Activated CD8-positive, alpha-beta T cell treated with anti-CD3 and anti-CD28 coated beads for 36 hours (primary cell): ENCODE measurements at regions of chr12 and their contacts with region 1.

Region 1: GRCh38 chr12:50111693-50112455 is at the start of gene COX14:
- DNase-seq: peak; percentile 100
- ATAC-seq: peak; percentile 88
- H3K4me3 Mint-ChIP-seq: peak within 1 kb of the TSS; percentile 95
- H3K27ac Mint-ChIP-seq: peak within 1 kb of the TSS; percentile 94
- H3K4me1 Mint-ChIP-seq: peaks cover 34% of the 10 kb centered on the region
- H3K27me3 Mint-ChIP-seq: no peaks in the 10 kb centered on the region
- CTCF ChIP-seq: peak; percentile 84
- total RNA-seq, gene COX14: 43.1 to 51.0 TPM

Region 2: DNA sequence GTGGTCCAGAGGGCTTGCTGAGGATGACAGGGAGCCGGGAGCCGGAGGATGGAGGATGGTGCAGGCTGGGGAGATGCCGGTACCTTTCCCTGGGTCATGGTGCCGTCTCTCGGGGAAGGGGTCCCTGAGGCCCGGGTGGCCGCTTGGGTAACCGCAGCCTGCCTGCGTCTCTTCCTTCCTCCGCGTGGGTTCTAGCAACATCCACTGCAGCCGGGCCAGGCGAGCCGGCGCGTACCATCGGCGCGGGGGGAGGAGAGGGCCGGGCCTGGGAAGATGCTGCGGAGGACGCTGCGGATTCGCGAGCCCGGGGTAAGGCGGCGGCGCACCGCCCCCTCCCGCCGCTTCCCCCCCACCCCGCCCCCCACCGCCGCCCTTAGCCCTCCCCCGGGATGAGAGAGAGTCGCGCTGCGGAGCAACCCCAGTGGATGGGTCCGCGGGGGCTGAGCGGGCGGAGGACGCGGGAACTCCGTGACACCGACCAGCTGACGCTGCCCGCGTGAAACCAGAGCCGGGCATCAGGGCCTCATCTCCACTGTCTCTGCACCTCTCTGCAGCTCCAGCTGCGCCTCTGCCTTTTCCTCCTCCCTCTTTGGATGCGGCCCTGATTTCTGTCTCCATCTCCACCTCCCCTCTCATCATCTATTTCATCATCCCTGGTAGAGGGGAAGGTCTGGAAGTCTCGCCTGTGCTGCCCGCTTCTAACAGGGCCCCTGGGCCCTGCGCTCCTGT is 208.0 kb before region 1 on chr12 and contains the start of gene FAIM2:
- CTCF ChIA-PET with region 1: no interaction called
- POLR2A ChIA-PET with region 1: no interaction called
- intact Hi-C with region 1: no loop called
- DNase-seq: peak; percentile 62
- ATAC-seq: peak; percentile 78
- H3K4me3 Mint-ChIP-seq: peak within 1 kb of the TSS; percentile 65
- H3K27ac Mint-ChIP-seq: peak within 1 kb of the TSS; percentile 34
- H3K4me1 Mint-ChIP-seq: peaks cover 10% of the 10 kb centered on the region
- H3K27me3 Mint-ChIP-seq: peaks cover 9% of the 10 kb centered on the region
- CTCF ChIP-seq: no peak
- total RNA-seq, gene FAIM2: 0.22 to 0.56 TPM

Region 3: DNA sequence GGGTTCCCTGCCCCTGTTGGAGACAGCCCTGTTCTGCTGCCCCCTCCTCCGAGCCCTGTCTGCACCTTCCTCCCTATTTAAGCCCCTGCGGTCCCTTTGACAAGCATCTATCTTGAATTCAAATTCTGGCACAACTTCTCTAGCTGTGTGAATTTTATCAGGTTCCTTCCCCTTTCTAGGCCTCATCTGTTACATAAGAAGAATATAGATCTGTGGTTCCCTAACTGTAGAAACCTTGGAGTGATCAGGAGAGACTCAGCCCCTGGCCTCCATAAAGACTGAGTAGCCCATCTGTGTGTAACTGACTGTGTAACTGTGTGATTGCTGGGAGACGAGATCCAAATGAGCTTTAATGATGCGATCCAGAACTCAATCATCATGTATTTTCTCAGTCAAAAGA is 73.5 kb before region 1 on chr12:
- CTCF ChIA-PET with region 1: interaction called, 21 read pairs
- POLR2A ChIA-PET with region 1: no interaction called
- intact Hi-C with region 1: no loop called
- DNase-seq: no peak
- ATAC-seq: no peak
- H3K4me3 Mint-ChIP-seq: no peak overlapping the region
- H3K27ac Mint-ChIP-seq: no peak overlapping the region
- H3K4me1 Mint-ChIP-seq: peaks cover 12% of the 10 kb centered on the region
- H3K27me3 Mint-ChIP-seq: peaks cover 9% of the 10 kb centered on the region
- CTCF ChIP-seq: no peak

Region 4: DNA sequence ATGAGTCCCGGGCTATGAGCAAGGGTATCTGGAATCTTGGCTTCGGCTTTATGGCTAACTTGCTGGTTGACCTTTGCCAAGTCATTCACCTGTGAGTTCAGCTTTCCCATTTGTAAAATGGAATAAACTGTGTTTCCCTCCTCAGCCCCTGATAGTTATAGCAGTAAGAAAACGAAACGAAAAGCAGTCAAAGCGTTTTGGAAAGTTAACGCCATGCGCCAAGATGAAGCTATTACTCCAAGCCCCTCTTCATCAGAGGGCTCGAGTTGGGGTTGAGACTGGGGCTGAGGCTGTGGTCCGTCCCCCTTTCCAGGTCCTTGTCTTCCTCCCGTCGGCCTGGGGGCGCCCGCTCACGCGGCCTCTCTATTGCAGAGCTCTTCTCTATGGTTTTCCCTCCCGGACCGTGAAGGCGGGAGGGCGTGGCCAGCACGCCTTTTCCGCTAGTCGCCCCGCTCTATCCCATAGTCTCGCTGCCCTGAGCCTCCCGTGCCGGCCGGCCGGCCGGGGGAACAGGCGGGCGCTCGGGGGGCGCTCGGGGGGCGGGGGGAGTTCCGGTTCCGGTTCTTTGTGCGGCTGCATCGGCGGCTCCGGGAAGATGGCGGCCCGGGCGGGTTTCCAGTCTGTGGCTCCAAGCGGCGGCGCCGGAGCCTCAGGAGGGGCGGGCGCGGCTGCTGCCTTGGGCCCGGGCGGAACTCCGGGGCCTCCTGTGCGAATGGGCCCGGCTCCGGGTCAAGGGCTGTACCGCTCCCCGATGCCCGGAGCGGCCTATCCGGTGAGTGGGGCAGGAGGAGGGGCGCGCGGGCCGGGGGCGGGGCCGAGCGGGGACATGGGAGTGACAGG is 26.9 kb before region 1 on chr12 and contains the start of gene SMARCD1:
- CTCF ChIA-PET with region 1: interaction called, 35 read pairs
- POLR2A ChIA-PET with region 1: interaction called, 26 read pairs
- intact Hi-C with region 1: no loop called
- DNase-seq: peak; percentile 90
- ATAC-seq: peak; percentile 88
- H3K4me3 Mint-ChIP-seq: peak within 1 kb of the TSS; percentile 90
- H3K27ac Mint-ChIP-seq: peak within 1 kb of the TSS; percentile 93
- H3K4me1 Mint-ChIP-seq: peaks cover 44% of the 10 kb centered on the region
- H3K27me3 Mint-ChIP-seq: no peaks in the 10 kb centered on the region
- CTCF ChIP-seq: no peak
- total RNA-seq, gene SMARCD1: 47.3 to 55.1 TPM

Region 5: GRCh38 chr12:50142993-50143392 is 31.1 kb after region 1 on chr12:
- CTCF ChIA-PET with region 1: interaction called, 10 read pairs
- POLR2A ChIA-PET with region 1: interaction called, 7 read pairs
- intact Hi-C with region 1: no loop called
- DNase-seq: no peak
- ATAC-seq: no peak
- H3K4me3 Mint-ChIP-seq: no peak overlapping the region
- H3K27ac Mint-ChIP-seq: no peak overlapping the region
- H3K4me1 Mint-ChIP-seq: peaks cover 4% of the 10 kb centered on the region
- H3K27me3 Mint-ChIP-seq: no peaks in the 10 kb centered on the region
- CTCF ChIP-seq: no peak

Region 6: DNA sequence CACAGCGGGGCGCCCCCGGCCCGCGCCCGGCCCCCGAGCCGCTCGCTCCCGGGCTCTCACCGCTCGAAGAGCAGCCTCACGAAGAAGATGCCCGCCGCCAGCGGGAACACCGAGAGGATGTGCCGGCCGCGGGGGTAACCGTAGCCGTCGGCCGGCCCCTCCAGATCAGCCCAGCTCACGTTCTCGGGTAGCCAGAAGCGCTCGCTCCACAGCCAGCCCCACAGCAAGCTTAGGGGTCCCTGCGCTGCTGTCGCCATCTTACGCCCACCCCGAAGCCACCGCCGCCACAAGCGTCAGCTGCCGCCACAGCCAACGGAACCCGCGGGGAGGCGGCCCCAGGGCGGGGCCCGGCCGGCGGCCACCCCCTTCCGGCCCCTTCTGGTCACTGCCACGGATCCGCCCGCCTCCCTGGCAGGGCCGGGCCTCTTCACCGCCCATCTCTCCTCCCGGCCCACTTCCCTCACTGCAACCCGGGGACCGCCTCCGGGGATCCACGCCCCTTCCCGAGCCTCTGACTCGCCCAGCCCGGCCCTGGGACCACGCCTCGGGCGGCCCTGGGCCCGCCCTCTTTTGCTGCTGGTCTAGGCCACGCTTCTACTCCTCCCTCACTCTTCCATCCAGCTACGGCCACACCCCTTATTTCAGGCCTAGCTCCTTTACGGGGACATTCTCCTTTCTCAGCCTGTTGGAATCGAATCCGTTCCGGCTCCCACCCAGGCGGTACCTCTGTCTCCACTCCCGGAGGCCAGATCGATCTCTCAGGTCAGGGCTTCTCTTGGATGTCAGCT is 55.4 kb after region 1 on chr12 and contains the start of gene CERS5:
- CTCF ChIA-PET with region 1: interaction called, 51 read pairs
- POLR2A ChIA-PET with region 1: interaction called, 21 read pairs
- intact Hi-C with region 1: no loop called
- DNase-seq: peak; percentile 99
- ATAC-seq: peak; percentile 99
- H3K4me3 Mint-ChIP-seq: peak within 1 kb of the TSS; percentile 85
- H3K27ac Mint-ChIP-seq: peak within 1 kb of the TSS; percentile 96
- H3K4me1 Mint-ChIP-seq: peaks cover 25% of the 10 kb centered on the region
- H3K27me3 Mint-ChIP-seq: no peaks in the 10 kb centered on the region
- CTCF ChIP-seq: no peak
- total RNA-seq, gene CERS5: 33.9 to 39.5 TPM

Region 7: GRCh38 chr12:50314629-50315312 is 202.9 kb after region 1 on chr12:
- CTCF ChIA-PET with region 1: interaction called, 27 read pairs
- POLR2A ChIA-PET with region 1: no interaction called
- intact Hi-C with region 1: loop called (anchors 10 kb)
- DNase-seq: no peak
- ATAC-seq: no peak
- H3K4me3 Mint-ChIP-seq: no peak overlapping the region
- H3K27ac Mint-ChIP-seq: no peak overlapping the region
- H3K4me1 Mint-ChIP-seq: peaks cover 2% of the 10 kb centered on the region
- H3K27me3 Mint-ChIP-seq: no peaks in the 10 kb centered on the region
- CTCF ChIP-seq: peak; percentile 70